ENCODE measurements at regions of chr4 and their contacts with region 1.

Region 1: GRCh38 chr4:181143250-181143854 is 1099.8 kb upstream of the TENM3 start:
- DNase-seq: peak; percentile 85
- H3K4me3 ChIP-seq: no peak overlapping the region
- H3K27ac ChIP-seq: no peak overlapping the region
- H3K4me1 ChIP-seq: no peaks in the 10 kb centered on the region
- H3K27me3 ChIP-seq: peaks cover 0 to 7% (median 0%) of the 10 kb centered on the region in 3 donors
- CTCF ChIP-seq: peak; percentile 55 to 84 (median 58)
- EP300 ChIP-seq: no peak
- POLR2A ChIP-seq: no peak

Region 2: GRCh38 chr4:180542445-180543100 is 600.8 kb before region 1 on chr4:
- intact Hi-C with region 1: no loop called
- DNase-seq: no peak
- H3K4me3 ChIP-seq: no peak overlapping the region
- H3K27ac ChIP-seq: no peak overlapping the region
- H3K4me1 ChIP-seq: peaks cover 0 to 8% (median 3%) of the 10 kb centered on the region in 4 donors
- H3K27me3 ChIP-seq: no peaks in the 10 kb centered on the region
- CTCF ChIP-seq: no peak
- EP300 ChIP-seq: no peak
- POLR2A ChIP-seq: no peak

Region 3: DNA sequence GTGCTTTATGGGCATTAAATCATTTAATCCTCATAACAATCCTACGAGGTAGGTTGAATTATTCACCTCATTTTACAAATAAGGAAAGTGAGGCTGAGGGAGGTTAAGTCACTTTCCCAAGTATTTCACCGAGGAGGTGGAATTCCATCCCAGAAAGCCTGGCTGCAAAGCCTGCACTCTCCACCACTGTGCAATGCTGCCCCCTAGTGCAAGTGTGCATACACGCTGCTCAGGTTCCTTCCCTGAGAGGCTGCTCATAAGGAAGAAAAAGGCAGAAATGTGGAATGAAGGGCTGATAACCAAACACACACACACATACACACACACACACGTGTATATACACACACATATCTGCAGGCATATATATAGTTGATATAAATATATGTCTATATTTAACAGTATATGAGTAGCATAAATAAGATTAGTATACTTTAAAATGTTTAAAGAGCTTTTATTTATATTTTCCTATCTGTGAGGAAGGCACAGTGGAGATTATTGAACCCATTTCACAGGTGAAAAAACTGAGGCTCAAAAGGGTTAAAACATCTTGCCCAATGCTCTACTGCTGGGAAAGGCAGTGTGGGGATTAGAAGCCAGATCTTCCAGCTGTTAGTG is 385.3 kb after region 1 on chr4:
- intact Hi-C with region 1: loop called (anchors 2 kb)
- DNase-seq: no peak
- H3K4me3 ChIP-seq: no peak overlapping the region
- H3K27ac ChIP-seq: no peak overlapping the region
- H3K4me1 ChIP-seq: no peaks in the 10 kb centered on the region
- H3K27me3 ChIP-seq: no peaks in the 10 kb centered on the region
- CTCF ChIP-seq: peak; percentile 36 to 69 (median 56)
- EP300 ChIP-seq: no peak
- POLR2A ChIP-seq: no peak